Spleen (tissue), 13 donors: ENCODE measurements at regions of chr11 and their contacts with region 1.

Region 1: DNA sequence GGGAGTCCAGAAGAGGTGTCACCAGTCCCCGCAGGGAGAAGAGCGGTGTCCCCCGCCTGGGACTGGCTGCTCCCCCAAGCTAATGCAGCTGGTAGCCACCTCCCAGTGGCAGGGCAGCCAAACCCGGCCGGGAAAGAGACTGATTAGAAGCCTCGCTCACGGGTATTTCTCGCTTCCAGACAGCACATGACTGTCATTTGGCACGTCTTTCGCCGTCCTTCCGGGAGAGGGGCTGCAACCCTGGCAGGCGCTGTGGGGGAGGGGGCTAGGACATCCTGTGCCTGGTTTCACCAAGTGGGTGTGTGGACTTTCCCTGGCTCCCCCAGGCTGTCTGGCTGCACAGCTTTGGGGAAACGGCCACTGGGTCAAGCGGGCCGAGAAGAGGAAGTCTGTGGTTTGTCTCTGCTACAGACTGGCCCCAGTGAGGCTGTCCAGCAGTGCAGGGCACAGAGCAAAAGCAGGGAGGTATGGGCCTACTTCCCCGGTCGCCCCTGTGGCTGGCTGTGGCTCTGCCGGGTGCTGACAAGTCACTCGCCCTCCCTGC is 3.8 kb downstream of the CD81 start:
- DNase-seq: peak; percentile 90
- H3K4me3 ChIP-seq: peak overlapping the region in 6 of 8 donors; percentile 4 to 97 (median 86)
- H3K27ac ChIP-seq: peak overlapping the region; percentile 68 to 98 (median 92)
- H3K4me1 ChIP-seq: peaks cover 59 to 96% (median 85%) of the 10 kb centered on the region in 6 donors
- H3K27me3 ChIP-seq: peaks cover 0 to 12% (median 0%) of the 10 kb centered on the region in 7 donors
- CTCF ChIP-seq: peak in 2 of 11 experiments; percentile 11 to 17
- POLR2A ChIP-seq: peak in 1 of 3 donors; percentile 38

Region 2: GRCh38 chr11:1970956-1971355 is 409.9 kb before region 1 on chr11:
- intact Hi-C with region 1: no loop called
- DNase-seq: peak; percentile 38
- H3K4me3 ChIP-seq: no peak overlapping the region
- H3K27ac ChIP-seq: no peak overlapping the region
- H3K4me1 ChIP-seq: no peaks in the 10 kb centered on the region
- H3K27me3 ChIP-seq: no peaks in the 10 kb centered on the region
- CTCF ChIP-seq: no peak
- POLR2A ChIP-seq: no peak

Region 3: GRCh38 chr11:2314525-2315394 is 66.1 kb before region 1 on chr11:
- intact Hi-C with region 1: loop called (anchors 2 kb)
- DNase-seq: peak; percentile 79
- H3K4me3 ChIP-seq: no peak overlapping the region
- H3K27ac ChIP-seq: peak overlapping the region; percentile 42 to 78 (median 65)
- H3K4me1 ChIP-seq: peaks cover 0 to 46% (median 14%) of the 10 kb centered on the region in 6 donors
- H3K27me3 ChIP-seq: no peaks in the 10 kb centered on the region
- CTCF ChIP-seq: no peak
- POLR2A ChIP-seq: no peak

Region 4: GRCh38 chr11:2586087-2586792 is 205.4 kb after region 1 on chr11:
- intact Hi-C with region 1: no loop called
- DNase-seq: peak; percentile 59
- H3K4me3 ChIP-seq: no peak overlapping the region
- H3K27ac ChIP-seq: no peak overlapping the region
- H3K4me1 ChIP-seq: no peaks in the 10 kb centered on the region
- H3K27me3 ChIP-seq: no peaks in the 10 kb centered on the region
- CTCF ChIP-seq: no peak
- POLR2A ChIP-seq: no peak